Posterior vena cava (tissue), 2 donors: ENCODE measurements at regions of chr18 and their contacts with region 1.

Region 1: DNA sequence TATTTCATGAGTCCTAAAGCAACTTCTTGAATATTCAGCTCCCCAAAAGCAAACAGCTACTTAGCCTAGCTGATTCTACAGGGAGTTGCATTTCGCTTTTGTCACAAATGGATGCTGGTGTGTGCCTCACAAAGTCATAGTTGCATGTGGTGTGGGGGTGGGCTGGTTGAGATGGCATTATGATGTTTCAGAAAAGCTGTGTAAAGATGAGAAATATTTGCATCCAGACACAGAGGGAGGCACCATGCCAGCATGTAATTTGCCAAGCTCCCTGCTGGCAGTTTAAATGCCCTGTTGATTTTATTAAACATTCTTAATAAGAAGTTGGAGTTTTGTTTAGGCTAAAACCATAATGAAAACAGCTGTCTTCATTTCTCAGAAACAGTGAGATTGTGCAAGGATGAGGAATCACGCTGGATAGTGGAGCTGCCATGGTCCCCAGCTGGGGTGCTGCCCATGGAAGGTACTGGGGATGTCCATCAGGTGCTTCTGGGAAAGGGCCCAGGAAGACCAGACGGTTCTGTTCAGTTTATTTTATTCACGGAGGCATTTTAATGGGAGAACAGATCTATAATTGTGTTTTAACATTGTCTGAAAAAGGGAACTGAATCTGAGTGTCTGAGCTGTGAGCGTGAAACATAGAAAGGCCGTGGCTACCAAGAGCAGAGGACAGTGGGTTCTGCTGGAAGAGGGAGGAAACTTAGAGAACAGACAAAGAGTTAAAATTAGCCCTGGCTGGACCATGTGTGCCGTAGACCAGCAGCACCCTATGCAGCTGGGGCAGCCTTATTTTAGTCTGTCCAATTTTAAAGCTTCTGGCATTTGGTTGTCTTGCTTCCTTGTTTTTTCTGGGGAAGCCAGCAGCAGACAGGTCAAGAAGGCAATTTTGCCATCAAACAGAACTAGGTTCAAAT is 177.1 kb downstream of the FAM210A start:
- DNase-seq: peak; percentile 64

Region 2: GRCh38 chr18:13379930-13380690 is 169.1 kb before region 1 on chr18:
- intact Hi-C with region 1: loop called in 1 of 2 experiments (anchors 2 kb)
- DNase-seq: no peak

Region 3: GRCh38 chr18:13726232-13726971 is 177.2 kb after region 1 on chr18 and contains the starts of genes FAM210A and RNMT:
- intact Hi-C with region 1: loop called in 1 of 2 experiments (anchors 10 kb)
- DNase-seq: peak; percentile 99
- total RNA-seq, gene FAM210A: 12.9 to 18.4 TPM
- total RNA-seq, gene RNMT: 28.8 to 33.3 TPM